Keratinocyte (primary cell): ENCODE measurements at regions of chr10 and their contacts with region 1.

Region 1: GRCh38 chr10:107727767-107728317 is 563.3 kb upstream of the SORCS1 start:
- DNase-seq: no peak
- H3K4me3 ChIP-seq: no peak overlapping the region
- H3K27ac ChIP-seq: no peak overlapping the region
- H3K4me1 ChIP-seq: no peaks in the 10 kb centered on the region
- H3K27me3 ChIP-seq: no peaks in the 10 kb centered on the region
- CTCF ChIP-seq: no peak

Region 2: GRCh38 chr10:107692072-107692471 is 35.8 kb before region 1 on chr10:
- dilution Hi-C with region 1: loop called (anchors 5 kb)
- DNase-seq: no peak
- H3K4me3 ChIP-seq: no peak overlapping the region
- H3K27ac ChIP-seq: no peak overlapping the region
- H3K4me1 ChIP-seq: no peaks in the 10 kb centered on the region
- H3K27me3 ChIP-seq: no peaks in the 10 kb centered on the region
- CTCF ChIP-seq: no peak